ENCODE measurements at regions of chr3 and their contacts with region 1.

Region 1: DNA sequence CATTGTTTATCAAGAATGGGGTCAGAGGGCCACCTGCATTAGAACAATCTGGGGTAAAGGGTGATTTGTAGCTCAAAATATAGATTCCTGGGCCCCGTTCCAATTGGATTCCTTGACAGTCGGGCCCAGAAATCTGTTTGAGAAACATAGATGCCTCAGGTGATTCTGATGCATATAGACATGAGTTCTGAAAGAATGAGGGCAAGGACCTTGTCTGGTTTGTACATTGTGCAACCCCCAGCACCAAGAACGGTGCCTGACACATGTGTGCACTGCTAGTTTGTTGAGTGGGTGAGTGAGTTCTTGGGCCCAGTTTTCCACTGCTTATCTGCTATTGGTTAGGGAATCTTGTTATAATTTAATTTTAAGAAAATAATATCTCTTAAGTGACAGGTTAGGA is 16.6 kb downstream of the CRYBG3 start:
- DNase-seq: no peak
- H3K4me3 ChIP-seq: no peak overlapping the region
- H3K27ac ChIP-seq: no peak overlapping the region
- H3K4me1 ChIP-seq: no peaks in the 10 kb centered on the region; a peak in 1 of 4 replicates
- H3K27me3 ChIP-seq: no peaks in the 10 kb centered on the region
- CTCF ChIP-seq: no peak
- EP300 ChIP-seq: no peak
- RAD21 ChIP-seq: no peak

Region 2: DNA sequence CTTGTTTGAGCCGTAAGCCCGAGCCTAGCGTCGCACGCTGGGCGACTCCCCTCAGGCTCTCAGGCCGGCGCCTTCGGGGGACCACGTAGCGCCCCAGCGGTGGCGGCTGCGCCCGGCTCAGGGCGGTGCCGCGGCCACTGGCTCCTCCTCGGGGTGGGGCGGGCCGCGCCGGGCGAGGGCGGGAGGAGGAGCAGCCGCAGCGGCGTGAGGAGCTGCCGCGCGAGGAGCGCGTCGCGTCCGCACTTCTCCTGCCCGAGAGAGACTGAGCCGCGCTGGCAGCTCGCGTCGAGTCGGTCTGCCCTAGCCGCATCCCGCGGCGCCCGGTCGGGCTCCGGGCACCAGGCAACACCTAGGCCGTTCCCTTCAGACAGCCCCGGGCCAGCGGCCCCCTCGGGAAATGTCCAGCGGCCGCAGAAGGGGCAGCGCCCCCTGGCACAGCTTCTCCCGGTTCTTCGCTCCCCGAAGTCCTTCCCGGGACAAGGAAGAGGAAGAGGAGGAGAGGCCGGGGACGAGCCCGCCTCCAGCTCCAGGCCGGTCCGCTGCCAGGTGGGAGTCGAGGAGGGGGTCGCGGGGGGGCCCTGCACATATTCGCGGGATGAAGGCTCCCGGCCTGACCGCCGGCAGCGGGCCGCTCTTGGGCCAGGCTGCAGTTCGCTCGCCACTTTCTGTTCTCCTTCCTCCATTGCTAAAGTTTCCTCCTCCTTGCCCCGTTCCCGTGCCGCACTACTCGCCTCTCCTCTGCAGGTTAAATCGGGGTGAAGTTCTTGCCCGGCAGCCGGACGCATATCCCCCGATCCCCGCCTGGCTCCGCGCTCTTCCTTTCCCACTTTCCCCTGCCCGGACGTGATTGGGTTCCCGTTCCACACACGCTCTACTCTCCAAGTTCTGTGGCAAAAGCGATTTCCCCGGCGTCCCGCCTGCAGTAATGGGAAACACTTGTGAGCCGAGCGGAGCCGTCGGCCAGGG is 16.3 kb before region 1 on chr3 and contains the start of gene CRYBG3:
- CTCF ChIA-PET with region 1: interaction called, 18 read pairs
- POLR2A ChIA-PET with region 1: no interaction called
- DNase-seq: peak; percentile 92
- H3K4me3 ChIP-seq: peak within 1 kb of the TSS; percentile 91 to 93
- H3K27ac ChIP-seq: peak within 1 kb of the TSS; percentile 68 to 69; a peak in 3 of 4 replicates
- H3K4me1 ChIP-seq: peaks cover 5 to 8% of the 10 kb centered on the region in 2 experiments; a peak in 3 of 4 replicates
- H3K27me3 ChIP-seq: peaks cover 5% of the 10 kb centered on the region; the same call in 1 of the 2 replicates
- CTCF ChIP-seq: peak; percentile 58
- EP300 ChIP-seq: no peak
- RAD21 ChIP-seq: no peak
- polyA plus RNA-seq, gene CRYBG3: 2.4 and 2.8 TPM in 2 replicates

Region 3: DNA sequence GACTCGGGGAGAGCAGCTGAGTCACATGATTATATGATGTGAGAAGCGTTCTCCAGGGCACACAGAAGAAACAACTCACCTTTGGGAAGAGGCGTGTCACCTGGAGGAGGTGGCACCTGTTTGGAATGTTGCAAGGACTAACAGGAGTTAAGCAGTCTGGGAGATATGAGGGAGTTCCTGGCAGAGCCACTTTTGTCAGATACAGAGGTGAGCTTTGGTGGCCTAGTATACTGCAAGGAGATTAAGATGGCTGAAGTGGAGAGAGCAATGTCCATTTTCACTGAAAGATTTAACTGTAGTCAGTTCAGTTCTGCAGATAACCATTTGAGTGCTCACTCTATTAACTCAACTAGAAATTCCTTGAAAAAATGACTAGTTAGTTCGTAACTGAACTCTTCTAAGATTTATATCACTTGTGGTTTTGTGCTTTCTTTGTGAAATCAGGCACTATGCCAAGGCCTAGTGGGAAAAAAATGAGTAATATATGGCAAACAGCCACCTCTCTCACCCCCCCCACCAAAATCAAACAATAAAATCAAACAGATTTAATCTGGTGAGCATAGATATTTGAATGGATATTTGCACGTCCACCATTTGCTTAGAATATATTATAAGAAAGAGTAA is 44.7 kb after region 1 on chr3:
- CTCF ChIA-PET with region 1: no interaction called
- POLR2A ChIA-PET with region 1: no interaction called
- DNase-seq: no peak
- H3K4me3 ChIP-seq: no peak overlapping the region
- H3K27ac ChIP-seq: peak overlapping the region in 1 of 2 experiments; percentile 28; a peak in 1 of 4 replicates
- H3K4me1 ChIP-seq: peaks cover 3 to 8% of the 10 kb centered on the region in 2 experiments; a peak in 3 of 4 replicates
- H3K27me3 ChIP-seq: no peaks in the 10 kb centered on the region
- CTCF ChIP-seq: no peak
- EP300 ChIP-seq: peak in 1 of 2 experiments; percentile 45; a peak in 1 of 4 replicates
- RAD21 ChIP-seq: no peak

Measured in SK-N-SH (cell line).